ENCODE measurements at regions of chr22 and their contacts with region 1.

Region 1: DNA sequence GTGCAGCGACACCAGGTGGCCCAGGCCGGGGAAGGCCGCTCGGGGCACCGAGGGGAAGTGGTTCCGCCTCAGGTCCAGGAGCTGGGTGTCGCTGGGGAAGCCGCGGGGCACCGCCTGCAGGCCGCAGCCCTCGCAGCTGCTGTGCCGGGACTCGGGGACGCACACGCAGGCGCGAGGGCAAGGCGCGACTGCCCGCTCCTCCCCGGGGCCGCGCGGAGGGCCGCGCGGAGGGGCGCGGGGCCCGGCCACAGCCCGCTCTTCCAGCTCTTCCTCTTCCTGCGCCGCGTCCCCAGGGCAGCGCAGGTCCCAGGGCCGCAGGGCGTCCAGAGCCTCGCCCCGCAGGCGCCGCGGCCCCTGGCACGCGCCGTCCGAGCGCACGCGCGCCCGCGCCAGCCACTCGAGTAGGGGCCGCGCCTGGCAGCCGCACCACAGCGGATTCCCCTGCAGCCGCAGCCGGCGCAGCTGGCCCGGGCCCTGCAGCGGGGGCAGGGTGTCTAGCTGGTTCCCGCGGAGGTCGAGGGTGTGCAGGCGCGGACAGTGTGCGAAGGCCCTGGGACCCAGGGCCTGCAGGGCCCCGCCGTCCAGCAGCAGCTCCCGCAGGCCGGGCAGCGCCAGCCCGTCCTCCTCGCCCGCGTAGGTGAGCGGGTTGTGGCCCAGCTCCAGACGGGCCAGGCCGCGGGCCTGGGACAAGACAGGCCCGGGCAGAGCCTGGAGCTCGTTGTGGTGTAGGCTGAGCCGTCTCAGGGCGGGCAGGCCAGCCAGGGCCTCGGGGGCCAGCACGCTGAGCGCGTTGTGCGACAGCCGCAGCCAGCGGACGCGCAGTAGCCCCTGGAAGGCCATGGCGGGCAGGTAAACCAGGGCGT is 2.8 kb downstream of the CHADL start:
- DNase-seq: peak; percentile 91
- CTCF ChIP-seq: peak; percentile 89

Region 2: GRCh38 chr22:40928657-40929056 is 309.3 kb before region 1 on chr22:
- CTCF ChIA-PET with region 1: interaction called, 96 read pairs
- POLR2A ChIA-PET with region 1: no interaction called
- DNase-seq: no peak
- CTCF ChIP-seq: no peak

Region 3: GRCh38 chr22:41171996-41172395 is 65.9 kb before region 1 on chr22:
- CTCF ChIA-PET with region 1: interaction called, 10 read pairs
- POLR2A ChIA-PET with region 1: no interaction called
- DNase-seq: no peak
- CTCF ChIP-seq: no peak

Region 4: DNA sequence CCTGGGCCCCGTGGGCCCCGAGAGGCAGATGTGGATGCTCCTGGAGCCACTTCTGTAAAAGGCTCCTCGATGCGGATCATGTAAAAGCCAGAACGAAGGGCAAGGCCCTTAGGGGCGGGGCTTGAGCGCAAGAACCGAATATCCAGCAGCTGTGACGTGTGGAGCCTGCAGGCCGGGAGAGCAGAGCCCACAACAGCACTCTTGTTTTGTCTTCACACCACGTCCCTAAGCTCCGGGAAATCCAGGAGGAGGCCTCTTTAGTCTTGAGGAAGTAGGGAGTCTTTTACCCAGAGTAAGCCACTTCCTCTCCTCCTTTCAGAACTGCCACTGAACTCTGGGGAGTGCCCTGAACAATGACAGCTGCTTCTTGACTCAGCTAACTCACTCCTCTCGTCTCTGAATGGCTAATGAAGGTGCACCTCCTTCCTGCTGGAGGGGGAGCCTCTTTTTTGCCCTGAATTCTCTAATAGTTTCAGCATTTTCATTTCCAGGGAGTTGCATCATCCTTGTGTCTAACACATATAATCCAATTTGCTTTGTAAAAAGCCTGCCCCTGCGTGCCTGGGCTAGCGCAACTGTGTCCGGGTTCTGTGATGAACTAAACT is 20.3 kb before region 1 on chr22:
- CTCF ChIA-PET with region 1: interaction called, 10 read pairs
- POLR2A ChIA-PET with region 1: no interaction called
- DNase-seq: peak; percentile 77
- CTCF ChIP-seq: no peak

Region 5: GRCh38 chr22:41226723-41227655 is 10.9 kb before region 1 on chr22:
- CTCF ChIA-PET with region 1: interaction called, 31 read pairs
- POLR2A ChIA-PET with region 1: no interaction called
- DNase-seq: no peak
- CTCF ChIP-seq: no peak

Region 6: DNA sequence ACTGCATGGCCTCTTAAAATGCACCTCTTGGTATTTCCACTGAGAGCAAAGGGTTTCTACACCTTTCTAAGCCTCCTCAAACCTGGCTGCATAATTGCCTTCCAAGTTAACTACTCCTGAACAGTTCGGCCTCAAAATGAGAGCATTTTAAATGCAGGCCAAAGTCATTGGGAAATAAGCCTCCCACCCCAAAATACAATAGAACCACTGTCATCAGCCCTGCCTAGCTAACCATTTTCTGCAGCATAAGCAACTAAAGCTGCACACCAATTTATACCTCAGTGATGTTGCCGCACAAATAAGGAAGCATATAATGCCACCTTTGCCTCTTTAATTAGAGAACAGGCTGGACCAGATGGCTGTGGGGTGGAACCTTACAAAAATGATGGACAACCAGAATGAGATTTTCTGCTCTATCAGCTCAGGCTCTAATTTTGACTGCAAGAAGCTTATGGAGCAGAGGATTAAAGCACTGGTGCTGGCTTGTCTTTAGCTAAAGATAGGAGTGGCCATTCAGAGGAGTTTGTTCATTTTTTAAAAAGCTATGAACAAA is 204.4 kb after region 1 on chr22:
- CTCF ChIA-PET with region 1: no interaction called
- POLR2A ChIA-PET with region 1: no interaction called
- DNase-seq: no peak
- CTCF ChIP-seq: no peak